B cell (primary cell): ENCODE measurements at regions of chr15 and their contacts with region 1.

Region 1: GRCh38 chr15:59501597-59501996 is 63.6 kb downstream of the FAM81A start:
- DNase-seq: peak; percentile 42
- ATAC-seq: no peak
- H3K4me3 ChIP-seq: no peak overlapping the region
- H3K4me3 Mint-ChIP-seq: no peak overlapping the region
- H3K27ac ChIP-seq: no peak overlapping the region
- H3K27ac Mint-ChIP-seq: no peak overlapping the region
- H3K4me1 ChIP-seq: no peaks in the 10 kb centered on the region
- H3K4me1 Mint-ChIP-seq: no peaks in the 10 kb centered on the region
- H3K27me3 ChIP-seq: no peaks in the 10 kb centered on the region
- H3K27me3 Mint-ChIP-seq: no peaks in the 10 kb centered on the region
- CTCF ChIP-seq: peak; percentile 64

Region 2: DNA sequence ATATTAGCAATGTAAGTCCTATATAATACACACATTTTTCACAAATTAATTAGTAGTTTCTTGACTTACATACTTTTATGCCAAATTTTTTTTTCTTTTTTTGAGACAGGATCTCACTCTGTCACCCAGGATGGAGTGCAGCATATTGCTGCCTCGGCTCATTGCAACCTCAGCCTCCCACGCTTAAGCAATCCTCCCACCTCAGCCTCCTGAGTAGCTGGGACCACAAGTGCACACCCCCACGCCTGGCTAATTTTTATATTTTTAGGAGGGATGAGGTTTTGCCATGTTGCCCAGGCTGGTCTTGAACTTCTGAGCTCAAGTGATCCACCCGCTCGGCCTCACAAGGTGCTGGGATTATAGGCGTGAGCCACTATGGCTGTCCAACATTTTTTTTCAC is 459.6 kb before region 1 on chr15:
- CTCF ChIA-PET with region 1: no interaction called
- POLR2A ChIA-PET with region 1: interaction called, 12 read pairs
- intact Hi-C with region 1: no loop called
- DNase-seq: no peak
- ATAC-seq: no peak
- H3K4me3 ChIP-seq: no peak overlapping the region
- H3K4me3 Mint-ChIP-seq: no peak overlapping the region
- H3K27ac ChIP-seq: no peak overlapping the region
- H3K27ac Mint-ChIP-seq: no peak overlapping the region
- H3K4me1 ChIP-seq: no peaks in the 10 kb centered on the region
- H3K4me1 Mint-ChIP-seq: peaks cover 15% of the 10 kb centered on the region
- H3K27me3 ChIP-seq: no peaks in the 10 kb centered on the region
- H3K27me3 Mint-ChIP-seq: no peaks in the 10 kb centered on the region
- CTCF ChIP-seq: no peak

Region 3: GRCh38 chr15:59174835-59175831 is 326.5 kb before region 1 on chr15:
- CTCF ChIA-PET with region 1: interaction called, 19 read pairs
- POLR2A ChIA-PET with region 1: no interaction called
- intact Hi-C with region 1: no loop called
- DNase-seq: peak; percentile 57
- ATAC-seq: peak; percentile 94
- H3K4me3 ChIP-seq: no peak overlapping the region
- H3K4me3 Mint-ChIP-seq: no peak overlapping the region
- H3K27ac ChIP-seq: no peak overlapping the region
- H3K27ac Mint-ChIP-seq: no peak overlapping the region
- H3K4me1 ChIP-seq: no peaks in the 10 kb centered on the region
- H3K4me1 Mint-ChIP-seq: peaks cover 7% of the 10 kb centered on the region
- H3K27me3 ChIP-seq: no peaks in the 10 kb centered on the region
- H3K27me3 Mint-ChIP-seq: no peaks in the 10 kb centered on the region
- CTCF ChIP-seq: peak; percentile 55

Region 4: DNA sequence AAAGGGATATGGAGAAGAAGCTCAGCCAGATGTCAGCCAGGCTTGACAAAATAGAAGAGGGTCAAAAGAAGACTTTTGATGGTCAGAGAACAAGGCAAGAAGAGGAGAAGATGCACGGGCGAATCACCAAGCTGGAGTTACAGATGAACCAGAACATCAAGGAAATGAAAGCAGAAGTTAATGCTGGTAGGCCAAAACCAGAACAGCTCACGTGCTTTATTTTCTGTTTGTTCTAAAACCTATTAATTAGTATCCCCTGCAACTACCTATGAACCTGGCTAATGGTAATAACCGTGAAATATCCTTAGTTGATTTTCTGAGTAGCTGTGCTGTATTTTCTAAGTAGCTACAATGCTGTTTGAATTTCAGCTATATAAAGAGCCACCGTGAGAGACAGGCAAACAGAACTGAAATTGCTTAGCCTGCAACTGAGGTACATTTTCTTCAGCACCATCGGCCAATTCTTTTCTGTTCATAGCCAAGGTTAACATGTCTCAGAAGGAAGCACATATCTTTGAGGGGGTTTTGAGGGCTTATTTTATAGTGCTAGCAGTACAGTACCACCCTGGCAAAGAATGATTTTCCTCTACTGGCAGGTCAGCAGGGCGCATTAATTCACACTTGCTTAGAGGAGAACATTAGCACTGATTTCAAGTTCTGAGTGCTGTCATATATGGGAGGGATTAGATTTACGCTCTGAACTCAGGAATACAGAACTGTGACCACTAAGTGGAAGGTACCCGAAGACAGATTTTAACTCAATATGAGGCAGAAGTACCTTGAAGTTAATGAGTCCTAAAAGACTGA is 15.3 kb after region 1 on chr15:
- CTCF ChIA-PET with region 1: interaction called, 32 read pairs
- POLR2A ChIA-PET with region 1: no interaction called
- intact Hi-C with region 1: no loop called
- DNase-seq: peak; percentile 77
- ATAC-seq: peak; percentile 77
- H3K4me3 ChIP-seq: peak overlapping the region in 2 of 5 experiments; percentile 11 to 25
- H3K4me3 Mint-ChIP-seq: peak overlapping the region; percentile 70
- H3K27ac ChIP-seq: peak overlapping the region; percentile 93 to 94
- H3K27ac Mint-ChIP-seq: peak overlapping the region; percentile 95
- H3K4me1 ChIP-seq: peaks cover 63 to 68% of the 10 kb centered on the region in 2 donors
- H3K4me1 Mint-ChIP-seq: peaks cover 56% of the 10 kb centered on the region
- H3K27me3 ChIP-seq: no peaks in the 10 kb centered on the region
- H3K27me3 Mint-ChIP-seq: no peaks in the 10 kb centered on the region
- CTCF ChIP-seq: no peak